ENCODE measurements at regions of chr16 and their contacts with region 1.

Region 1: DNA sequence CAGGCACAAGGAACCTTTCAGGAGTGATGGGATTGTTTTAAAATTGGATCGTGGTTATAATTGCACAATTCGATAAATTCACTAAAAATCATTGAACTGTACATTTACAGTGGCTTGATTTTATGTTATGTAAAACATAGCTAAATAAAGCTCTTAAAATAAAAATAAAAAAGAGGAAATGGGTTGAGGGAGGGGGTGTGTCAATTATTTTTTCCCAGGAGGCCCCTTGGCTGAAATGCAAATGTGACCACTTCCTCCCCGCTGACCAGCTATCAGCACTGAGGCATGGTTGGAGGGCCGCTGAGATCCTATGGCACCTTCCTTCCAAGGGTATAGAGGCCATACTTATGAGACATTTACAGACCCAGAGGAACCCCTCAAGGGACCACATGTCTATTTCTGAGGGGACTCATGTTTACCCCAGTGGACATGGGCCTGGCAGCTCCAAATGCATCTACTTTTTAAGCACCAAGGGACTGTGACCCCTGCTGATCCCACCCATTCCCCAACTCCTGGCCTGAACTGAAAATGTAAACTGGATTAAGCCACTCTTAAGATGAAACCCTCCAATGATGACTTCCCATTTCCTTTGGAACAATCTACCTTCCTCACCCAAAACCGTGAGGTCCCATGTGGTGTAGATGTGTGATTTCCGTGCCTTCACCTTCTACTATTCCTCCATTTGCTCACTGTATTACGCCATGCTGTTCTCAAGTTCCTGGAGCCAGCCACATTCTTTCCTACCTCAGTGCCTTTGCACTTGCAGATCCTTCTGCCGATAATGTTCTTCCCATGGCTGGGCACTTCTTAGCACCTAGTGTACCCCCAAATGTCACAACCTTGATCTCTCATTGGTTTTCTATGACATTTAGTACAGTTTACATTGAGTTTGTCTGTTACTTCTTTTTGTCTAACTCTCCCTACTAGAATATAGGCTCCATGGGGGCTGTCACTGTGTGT is 2.8 kb upstream of the IL21R start:
- DNase-seq: no peak
- ATAC-seq: no peak

Region 2: DNA sequence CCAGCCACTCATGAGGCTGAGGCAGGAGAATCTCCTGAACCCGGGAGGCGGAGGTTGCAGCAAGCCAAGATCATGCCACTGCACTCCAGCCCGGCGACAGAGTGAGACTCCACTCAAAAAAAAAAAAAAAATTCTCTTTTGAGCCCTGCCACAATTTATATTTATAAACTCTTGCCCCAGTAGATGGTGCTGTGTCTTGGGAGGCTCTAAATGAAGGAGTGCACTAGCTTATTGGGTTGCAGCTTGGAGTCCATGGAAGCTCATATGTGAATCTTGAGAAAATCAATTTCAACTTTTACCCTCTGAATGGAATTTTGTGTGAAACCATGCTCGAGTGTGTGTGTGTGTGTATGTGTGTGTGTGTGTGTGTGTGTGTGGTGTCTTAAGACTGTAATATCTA is 1287.3 kb before region 1 on chr16:
- intact Hi-C with region 1: loop called (anchors 10 kb)
- DNase-seq: no peak
- ATAC-seq: no peak

Region 3: GRCh38 chr16:27109666-27110523 is 289.3 kb before region 1 on chr16:
- intact Hi-C with region 1: no loop called
- DNase-seq: peak; percentile 89
- ATAC-seq: peak; percentile 98